ENCODE measurements at regions of chr17 and their contacts with region 1.

Region 1: DNA sequence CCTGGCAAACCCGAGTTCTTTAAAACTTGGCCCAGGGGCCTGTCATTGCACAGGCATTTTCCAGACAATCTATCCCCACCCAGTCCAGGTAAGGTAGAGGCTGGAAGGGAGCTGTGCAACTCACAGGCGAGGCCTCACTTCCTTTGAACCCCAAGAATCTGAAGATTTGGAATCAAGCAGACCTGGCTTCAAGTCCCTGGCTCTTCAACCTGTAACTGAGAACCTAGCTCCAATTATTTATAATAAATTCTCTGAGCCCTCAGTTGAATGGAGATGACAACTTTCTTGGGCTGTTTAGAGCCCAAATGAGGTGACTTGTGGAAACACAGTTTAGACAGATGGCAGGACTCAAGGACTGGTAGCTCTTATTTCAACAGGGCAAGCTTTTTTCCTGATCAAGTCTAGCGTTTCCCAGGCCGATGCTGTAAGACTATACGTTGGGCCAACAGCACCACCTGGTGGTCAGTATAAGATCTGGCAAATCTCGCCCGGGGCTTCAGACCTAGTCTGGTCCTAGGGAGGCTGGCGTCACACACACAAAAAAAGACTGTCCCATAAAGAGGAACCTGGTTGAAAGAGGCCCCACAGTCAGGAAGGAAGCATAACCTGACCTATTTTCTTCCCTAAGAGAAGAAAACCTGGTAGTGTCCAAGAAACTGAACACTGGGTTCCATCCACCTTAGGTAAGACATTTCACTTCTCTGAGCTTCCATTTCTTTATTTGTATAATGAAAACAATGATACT is 117.9 kb downstream of the C17orf67 start:
- DNase-seq: peak; percentile 74
- H3K4me3 ChIP-seq: no peak overlapping the region
- H3K27ac ChIP-seq: no peak overlapping the region
- H3K4me1 ChIP-seq: no peaks in the 10 kb centered on the region
- H3K27me3 ChIP-seq: peaks cover 0 to 2% of the 10 kb centered on the region in 2 experiments
- CTCF ChIP-seq: peak; percentile 75 to 80
- POLR2A ChIP-seq: no peak

Region 2: DNA sequence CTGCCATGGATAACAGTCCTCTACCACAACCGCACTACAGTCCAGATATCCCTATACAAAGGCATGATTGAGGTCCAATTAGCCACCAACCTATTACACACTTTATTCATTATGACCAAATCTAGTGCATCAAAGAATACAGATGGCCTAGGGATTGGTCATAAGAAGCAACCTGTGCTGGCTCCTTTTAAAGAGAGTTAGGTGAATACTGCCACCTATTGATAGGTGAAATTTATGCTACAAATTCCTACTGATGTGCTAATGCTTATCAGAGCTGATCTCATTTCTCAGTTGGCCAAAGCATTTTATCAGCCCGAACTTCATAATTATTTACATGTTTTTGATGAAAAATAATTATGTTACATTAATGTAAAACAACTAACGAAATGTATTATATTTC is 396.3 kb before region 1 on chr17:
- CTCF ChIA-PET with region 1: interaction called, 24 read pairs
- POLR2A ChIA-PET with region 1: no interaction called
- dilution Hi-C with region 1: no loop called
- intact Hi-C with region 1: no loop called
- DNase-seq: peak; percentile 64
- H3K4me3 ChIP-seq: no peak overlapping the region
- H3K27ac ChIP-seq: no peak overlapping the region
- H3K4me1 ChIP-seq: peaks cover 17% of the 10 kb centered on the region
- H3K27me3 ChIP-seq: peaks cover 23 to 35% of the 10 kb centered on the region in 2 experiments
- CTCF ChIP-seq: peak; percentile 40 to 52
- POLR2A ChIP-seq: no peak

Region 3: DNA sequence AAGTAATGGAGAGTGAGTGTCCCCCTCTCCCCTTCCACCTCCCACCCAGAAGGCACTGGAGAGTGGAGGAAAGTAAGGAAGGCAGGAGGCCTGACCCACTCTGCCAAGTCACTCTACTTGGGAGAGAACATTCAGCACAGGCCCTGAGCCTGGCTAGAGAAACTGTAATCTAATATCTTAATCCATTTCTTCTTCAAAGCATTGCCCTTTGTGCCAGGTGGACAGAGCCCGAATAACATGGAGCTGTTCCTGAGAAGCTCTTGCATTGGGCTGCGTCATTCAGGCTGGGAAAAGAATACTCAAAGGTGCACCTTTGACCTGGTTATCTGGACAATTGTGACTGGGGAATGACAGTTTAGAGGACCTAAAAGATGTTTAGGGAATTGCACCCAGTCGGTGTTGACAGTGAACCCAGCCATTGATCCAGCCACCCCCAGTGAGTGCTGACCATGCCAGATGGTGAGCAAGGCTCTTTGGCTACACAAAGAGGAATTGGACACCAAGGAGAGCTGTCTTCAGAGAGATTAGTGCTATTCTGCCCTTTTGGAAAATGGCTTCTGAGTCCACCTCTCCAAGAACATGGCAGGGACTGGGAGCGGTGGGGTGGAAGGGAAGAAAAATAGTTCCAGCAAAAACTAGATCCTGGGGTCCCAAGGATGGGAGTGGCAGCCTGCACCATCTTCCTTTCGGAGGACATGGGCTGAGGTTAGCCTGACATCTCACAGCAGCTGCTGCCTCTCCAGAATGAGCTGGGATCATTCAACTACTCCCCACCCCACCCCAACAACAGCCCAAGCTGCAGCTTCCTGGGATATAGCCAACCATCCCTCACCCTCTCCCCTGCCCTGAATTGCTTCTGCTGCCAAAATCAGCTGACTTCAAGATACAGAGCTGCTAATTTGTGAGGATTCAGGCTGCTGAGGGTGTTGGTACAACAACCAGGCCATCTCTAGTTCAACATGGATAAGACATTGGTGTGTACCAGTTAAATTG is 133.9 kb before region 1 on chr17:
- CTCF ChIA-PET with region 1: interaction called, 23 read pairs
- POLR2A ChIA-PET with region 1: no interaction called
- dilution Hi-C with region 1: loop called (anchors 25 kb)
- intact Hi-C with region 1: no loop called
- DNase-seq: no peak
- H3K4me3 ChIP-seq: no peak overlapping the region
- H3K27ac ChIP-seq: no peak overlapping the region
- H3K4me1 ChIP-seq: no peaks in the 10 kb centered on the region
- H3K27me3 ChIP-seq: peaks cover 6 to 10% of the 10 kb centered on the region in 2 experiments
- CTCF ChIP-seq: no peak
- POLR2A ChIP-seq: no peak

Region 4: GRCh38 chr17:56629531-56630075 is 86.2 kb before region 1 on chr17:
- CTCF ChIA-PET with region 1: interaction called, 15 read pairs
- POLR2A ChIA-PET with region 1: no interaction called
- dilution Hi-C with region 1: no loop called
- intact Hi-C with region 1: no loop called
- DNase-seq: no peak
- H3K4me3 ChIP-seq: no peak overlapping the region
- H3K27ac ChIP-seq: no peak overlapping the region
- H3K4me1 ChIP-seq: no peaks in the 10 kb centered on the region
- H3K27me3 ChIP-seq: no peaks in the 10 kb centered on the region
- CTCF ChIP-seq: peak in 1 of 2 donors; percentile 25
- POLR2A ChIP-seq: no peak

Region 5: DNA sequence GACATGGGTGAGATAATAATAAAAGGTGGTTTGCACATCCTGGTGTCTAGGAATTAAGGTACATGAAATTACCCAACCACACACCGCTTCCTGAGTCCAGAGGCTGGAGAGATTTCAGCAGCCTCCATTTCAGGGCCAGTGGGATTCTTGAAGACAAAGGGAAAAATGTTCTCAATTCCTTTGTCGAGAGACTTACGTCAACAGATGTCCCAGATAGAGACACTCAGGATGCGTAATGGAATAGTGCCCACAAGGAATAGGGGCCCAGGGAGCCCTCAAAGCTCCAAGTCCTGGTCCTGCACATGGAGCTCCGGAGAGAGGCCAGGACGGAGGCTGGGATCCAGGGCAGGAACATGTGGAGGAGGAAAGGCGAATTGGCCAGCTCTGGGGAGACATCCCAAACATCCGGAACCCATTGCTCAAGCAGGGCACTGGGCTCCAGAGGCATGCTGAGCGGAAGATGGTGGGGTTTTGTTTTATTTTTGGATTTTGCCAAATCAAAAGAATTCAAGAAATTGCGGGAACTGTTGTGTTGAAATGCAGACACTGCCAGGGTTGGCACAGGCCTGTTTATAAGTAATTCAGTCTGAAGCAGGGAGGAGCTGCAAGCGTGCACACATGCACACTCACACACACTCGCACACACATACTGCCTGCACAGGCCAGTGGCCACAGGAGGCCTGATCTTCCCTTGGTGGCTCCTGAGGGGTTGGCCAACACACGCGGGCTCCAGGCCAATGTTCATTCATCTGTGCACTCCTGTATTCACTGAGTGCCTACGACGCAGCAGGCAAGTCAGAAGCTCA is 25.1 kb before region 1 on chr17:
- CTCF ChIA-PET with region 1: interaction called, 54 read pairs
- POLR2A ChIA-PET with region 1: no interaction called
- dilution Hi-C with region 1: no loop called
- intact Hi-C with region 1: no loop called
- DNase-seq: no peak
- H3K4me3 ChIP-seq: no peak overlapping the region
- H3K27ac ChIP-seq: no peak overlapping the region
- H3K4me1 ChIP-seq: no peaks in the 10 kb centered on the region
- H3K27me3 ChIP-seq: no peaks in the 10 kb centered on the region
- CTCF ChIP-seq: no peak
- POLR2A ChIP-seq: no peak

Region 6: DNA sequence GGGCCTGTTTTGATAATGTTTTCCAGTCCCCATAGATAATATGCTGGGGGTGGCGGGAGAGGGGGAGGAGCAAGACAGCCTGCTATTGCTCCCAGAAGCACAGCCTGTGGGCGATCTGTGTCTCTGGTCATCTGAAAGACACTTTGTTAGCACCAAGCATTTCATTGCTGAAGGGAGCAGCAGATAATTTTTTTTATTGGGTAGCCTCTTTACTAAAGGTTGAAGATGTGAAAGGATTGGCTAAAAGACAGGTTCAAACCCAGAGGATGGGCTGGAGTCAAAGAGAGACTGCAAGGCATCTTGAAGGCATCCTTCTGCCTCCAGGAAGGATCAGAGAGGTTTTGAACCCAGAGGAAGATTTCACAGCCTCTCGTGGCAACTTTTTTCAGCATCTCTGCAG is 57.3 kb after region 1 on chr17:
- CTCF ChIA-PET with region 1: interaction called, 15 read pairs
- POLR2A ChIA-PET with region 1: no interaction called
- dilution Hi-C with region 1: no loop called
- intact Hi-C with region 1: no loop called
- DNase-seq: no peak
- H3K4me3 ChIP-seq: no peak overlapping the region
- H3K27ac ChIP-seq: no peak overlapping the region
- H3K4me1 ChIP-seq: no peaks in the 10 kb centered on the region
- H3K27me3 ChIP-seq: peaks cover 11 to 15% of the 10 kb centered on the region in 2 experiments
- CTCF ChIP-seq: no peak
- POLR2A ChIP-seq: no peak

Region 7: DNA sequence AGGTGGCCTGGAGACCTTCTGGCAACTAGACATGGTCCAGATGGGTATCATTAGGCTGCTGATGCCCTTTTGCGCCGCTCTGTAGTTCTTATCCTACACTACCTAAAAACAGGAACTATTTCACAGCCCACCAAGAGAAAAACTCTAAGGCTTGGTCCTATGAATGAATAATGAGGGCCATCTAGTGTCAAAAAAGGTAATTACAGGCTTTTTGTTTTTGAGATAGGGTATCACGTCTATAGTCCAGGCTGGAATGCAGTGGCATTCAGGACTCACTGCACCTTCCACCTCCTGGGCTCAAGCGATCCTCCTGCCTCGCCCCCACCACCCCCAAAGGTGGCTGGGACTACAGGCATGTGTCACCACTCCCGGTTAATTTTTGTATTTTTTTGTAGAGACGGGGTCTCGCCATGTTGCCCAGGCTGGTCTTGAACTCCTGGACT is 224.1 kb after region 1 on chr17:
- CTCF ChIA-PET with region 1: interaction called, 11 read pairs
- POLR2A ChIA-PET with region 1: no interaction called
- dilution Hi-C with region 1: no loop called
- intact Hi-C with region 1: no loop called
- DNase-seq: peak; percentile 77
- H3K4me3 ChIP-seq: no peak overlapping the region
- H3K27ac ChIP-seq: peak overlapping the region; percentile 35
- H3K4me1 ChIP-seq: peaks cover 24% of the 10 kb centered on the region
- H3K27me3 ChIP-seq: no peaks in the 10 kb centered on the region
- CTCF ChIP-seq: peak; percentile 51 to 53
- POLR2A ChIP-seq: no peak

Measured in endothelial cell of umbilical vein (primary cell).